A673 (cell line): ENCODE measurements at regions of chr6 and their contacts with region 1.

Region 1: GRCh38 chr6:129672881-129673643 is 36.9 kb downstream of the ARHGAP18 start:
- DNase-seq: peak; percentile 78
- H3K4me3 ChIP-seq: no peak overlapping the region
- H3K27ac ChIP-seq: peak overlapping the region; percentile 76
- H3K4me1 ChIP-seq: peaks cover 33% of the 10 kb centered on the region
- H3K27me3 ChIP-seq: no peaks in the 10 kb centered on the region
- CTCF ChIP-seq: no peak

Region 2: GRCh38 chr6:129709769-129710449 is 36.8 kb after region 1 on chr6 and contains the start of gene ARHGAP18:
- CTCF ChIA-PET with region 1: no interaction called
- POLR2A ChIA-PET with region 1: no interaction called
- intact Hi-C with region 1: loop called (anchors 5 kb)
- DNase-seq: peak; percentile 98
- H3K4me3 ChIP-seq: peak within 1 kb of the TSS; percentile 57
- H3K27ac ChIP-seq: peak within 1 kb of the TSS; percentile 74
- H3K4me1 ChIP-seq: peaks cover 25% of the 10 kb centered on the region
- H3K27me3 ChIP-seq: no peaks in the 10 kb centered on the region
- CTCF ChIP-seq: no peak
- total RNA-seq, gene ARHGAP18: 12.7 and 14.2 TPM in 2 replicates